HepG2 (cell line): ENCODE measurements at regions of chr12 and their contacts with region 1.

Region 1: DNA sequence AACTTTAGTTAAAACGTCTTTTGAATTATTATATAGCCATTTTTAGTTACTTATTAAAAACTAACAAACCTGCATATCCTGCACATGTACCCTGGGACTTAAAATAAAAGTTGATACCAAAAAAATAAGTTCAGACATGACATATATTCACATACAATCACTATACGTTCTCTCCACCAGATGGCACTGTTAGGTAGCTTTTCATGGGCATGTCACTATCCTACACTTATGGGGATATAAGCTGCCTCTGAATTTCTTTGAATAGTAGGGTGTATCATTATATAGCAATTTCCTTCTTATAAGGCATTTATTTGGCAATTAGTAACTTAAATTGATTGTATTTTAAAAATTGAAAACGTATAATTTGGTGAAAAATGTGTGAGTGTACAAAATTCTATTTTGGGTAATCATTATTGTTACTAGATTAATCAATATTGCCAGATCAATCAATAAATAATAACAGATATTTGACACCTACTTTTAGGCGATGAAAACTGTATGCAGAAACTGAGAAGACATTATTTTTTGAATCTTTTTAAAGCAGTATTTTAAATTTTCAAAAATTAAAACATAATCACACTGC is 31.8 kb upstream of the OR10A7 start:
- DNase-seq: peak; percentile 72
- ATAC-seq: peak; percentile 86
- H3K4me3 ChIP-seq: no peak overlapping the region
- H3K27ac ChIP-seq: no peak overlapping the region
- H3K4me1 ChIP-seq: no peaks in the 10 kb centered on the region
- H3K27me3 ChIP-seq: no peaks in the 10 kb centered on the region
- CTCF ChIP-seq: peak; percentile 79
- EP300 ChIP-seq: no peak
- POLR2A ChIP-seq: no peak
- RAD21 ChIP-seq: peak; percentile 83

Region 2: DNA sequence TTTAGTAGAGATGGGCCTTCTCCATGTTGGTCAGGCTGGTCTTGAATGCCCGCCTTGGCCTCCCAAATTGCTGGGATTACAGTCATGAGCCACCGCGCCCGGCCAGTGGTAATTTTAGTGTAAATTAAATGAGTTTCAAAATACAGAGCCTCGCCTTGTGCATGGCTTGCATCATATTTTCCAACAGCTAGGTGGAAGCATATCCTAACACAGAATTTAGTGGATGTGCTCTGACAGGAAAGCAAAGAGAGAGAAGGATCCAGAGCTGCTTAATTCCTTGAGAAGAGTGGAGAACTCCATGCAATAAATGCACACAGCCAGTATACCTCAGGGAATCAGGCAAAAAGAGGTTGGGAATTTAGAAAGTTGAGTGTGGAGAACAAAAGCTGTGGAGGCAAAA is 257.3 kb after region 1 on chr12:
- CTCF ChIA-PET with region 1: no interaction called
- POLR2A ChIA-PET with region 1: no interaction called
- in situ Hi-C with region 1: loop called (anchors 25 kb)
- intact Hi-C with region 1: loop called (anchors 1 kb)
- DNase-seq: peak; percentile 29
- ATAC-seq: peak; percentile 78
- H3K4me3 ChIP-seq: no peak overlapping the region
- H3K27ac ChIP-seq: no peak overlapping the region
- H3K4me1 ChIP-seq: no peaks in the 10 kb centered on the region
- H3K27me3 ChIP-seq: no peaks in the 10 kb centered on the region
- CTCF ChIP-seq: peak; percentile 77
- EP300 ChIP-seq: no peak
- POLR2A ChIP-seq: no peak
- RAD21 ChIP-seq: peak; percentile 83

Region 3: GRCh38 chr12:55619354-55620138 is 430.5 kb after region 1 on chr12:
- CTCF ChIA-PET with region 1: interaction called, 89 read pairs
- POLR2A ChIA-PET with region 1: no interaction called
- in situ Hi-C with region 1: loop called (anchors 10 kb)
- intact Hi-C with region 1: loop called (anchors 1 kb)
- DNase-seq: peak; percentile 92
- ATAC-seq: peak; percentile 97
- H3K4me3 ChIP-seq: no peak overlapping the region
- H3K27ac ChIP-seq: no peak overlapping the region
- H3K4me1 ChIP-seq: no peaks in the 10 kb centered on the region
- H3K27me3 ChIP-seq: no peaks in the 10 kb centered on the region
- CTCF ChIP-seq: peak; percentile 87
- EP300 ChIP-seq: no peak
- POLR2A ChIP-seq: no peak
- RAD21 ChIP-seq: peak; percentile 94

Region 4: DNA sequence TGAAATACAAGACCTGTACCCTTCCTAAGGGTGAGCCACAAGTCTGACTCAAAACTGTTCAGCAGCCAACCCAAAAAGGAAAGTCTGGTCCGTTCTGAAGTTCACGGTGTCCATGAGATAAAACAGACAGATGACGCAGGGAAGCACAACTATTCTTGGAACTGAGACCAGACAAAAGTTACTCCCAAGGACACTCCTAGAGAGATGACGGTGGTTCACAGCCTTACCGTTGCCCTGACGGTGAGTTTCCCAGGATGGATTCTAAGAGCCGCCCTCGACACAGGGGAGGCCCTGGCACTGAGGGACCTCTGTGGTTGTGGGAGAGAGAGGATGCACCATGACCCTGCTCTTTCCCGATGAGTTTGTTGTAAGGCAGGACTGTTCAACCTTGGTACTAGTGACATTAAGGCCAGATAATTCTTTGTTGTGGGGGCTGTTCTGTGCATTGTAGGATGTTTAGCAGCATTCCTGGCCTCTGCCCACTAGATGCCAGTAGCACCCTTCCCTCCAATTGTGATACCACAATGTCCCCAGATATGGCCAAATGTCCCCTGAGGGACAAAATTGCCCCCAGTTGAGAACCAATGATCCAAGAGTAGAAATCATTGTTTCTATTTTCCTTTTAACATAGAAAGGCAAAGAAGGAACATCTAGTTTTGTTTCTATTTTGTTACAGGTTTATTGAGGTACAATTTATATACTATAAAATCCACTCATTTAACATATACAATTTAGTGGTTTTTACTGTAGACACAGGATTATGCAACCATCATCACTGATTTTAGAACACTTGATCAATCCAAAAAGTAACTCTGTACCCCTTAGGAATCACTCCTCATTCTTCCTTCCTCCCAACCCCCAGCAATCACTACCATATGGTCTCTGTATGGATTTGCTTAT is 470.7 kb after region 1 on chr12:
- CTCF ChIA-PET with region 1: interaction called, 8 read pairs
- POLR2A ChIA-PET with region 1: no interaction called
- in situ Hi-C with region 1: no loop called
- intact Hi-C with region 1: loop called (anchors 1 kb)
- DNase-seq: peak; percentile 27
- ATAC-seq: peak; percentile 76
- H3K4me3 ChIP-seq: no peak overlapping the region
- H3K27ac ChIP-seq: no peak overlapping the region
- H3K4me1 ChIP-seq: peaks cover 10% of the 10 kb centered on the region
- H3K27me3 ChIP-seq: 0 out of 5 replicates have a peak, but pooled peaks cover 0 to 1% of the 10 kb centered on the region in 2 experiments
- CTCF ChIP-seq: peak; percentile 66
- EP300 ChIP-seq: no peak
- POLR2A ChIP-seq: no peak
- RAD21 ChIP-seq: peak; percentile 49; the same call in 1 of the 2 replicates

Region 5: DNA sequence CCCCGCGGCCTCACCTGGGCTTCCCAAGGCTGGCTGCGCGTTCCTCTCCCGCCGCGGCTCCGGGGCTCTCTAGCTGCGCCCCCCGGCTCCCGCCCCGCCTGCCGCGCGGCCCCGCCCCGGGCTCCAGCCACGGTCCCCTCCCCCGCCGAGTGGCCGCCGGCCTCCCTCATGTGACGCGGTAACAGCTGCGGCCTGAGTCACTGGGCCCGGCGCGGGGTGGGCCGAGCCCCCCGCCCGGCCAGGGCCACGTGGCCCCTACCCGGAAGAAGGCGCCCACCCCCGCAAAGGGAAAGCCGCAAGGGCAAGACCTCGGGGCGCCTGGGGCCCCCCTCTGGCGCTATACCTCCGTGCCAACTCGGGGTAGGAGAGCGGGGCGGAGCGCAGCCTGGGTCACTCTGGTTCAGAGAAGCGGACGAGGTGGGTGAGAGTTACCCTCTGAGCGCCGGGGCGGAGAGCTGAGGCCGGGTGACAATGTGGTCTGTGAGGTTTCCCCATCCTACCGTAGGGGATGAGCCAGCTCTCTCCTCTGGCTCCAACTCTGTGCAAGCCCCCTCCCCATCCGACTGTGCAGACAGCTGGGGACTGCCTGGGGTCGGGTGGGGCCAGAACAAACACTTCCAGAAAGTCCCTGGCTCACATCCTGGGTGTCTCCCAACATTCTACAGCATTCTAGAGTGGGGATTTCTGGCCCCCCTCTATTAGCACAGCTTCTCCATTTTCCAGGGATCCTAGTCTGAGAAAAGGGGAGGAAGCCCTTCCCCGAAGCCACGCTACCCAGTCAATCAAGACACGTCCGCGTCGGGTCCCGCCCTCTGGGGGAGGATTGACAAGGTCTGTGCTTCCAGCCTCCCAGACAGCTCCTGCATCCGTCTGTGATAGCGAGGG is 540.1 kb after region 1 on chr12 and contains the start of gene CD63:
- CTCF ChIA-PET with region 1: no interaction called
- POLR2A ChIA-PET with region 1: no interaction called
- in situ Hi-C with region 1: no loop called
- intact Hi-C with region 1: loop called (anchors 5 kb)
- DNase-seq: peak; percentile 73
- ATAC-seq: peak; percentile 81
- H3K4me3 ChIP-seq: peak within 1 kb of the TSS; percentile 84 to 89 (median 84)
- H3K27ac ChIP-seq: peak within 1 kb of the TSS; percentile 79
- H3K4me1 ChIP-seq: peaks cover 38% of the 10 kb centered on the region
- H3K27me3 ChIP-seq: no peaks in the 10 kb centered on the region; a peak in 1 of 5 replicates
- CTCF ChIP-seq: peak; percentile 17; the same call in 1 of the 2 replicates
- EP300 ChIP-seq: 0 out of 4 replicates have a peak, but pooled peaks of 1 of the 2 experiments have one; percentile 12
- POLR2A ChIP-seq: peak; percentile 41 to 69; a peak in 2 of 4 replicates
- RAD21 ChIP-seq: no peak
- total RNA-seq, gene CD63: 134 and 277 TPM in 2 replicates